ENCODE measurements at regions of chr3 and their contacts with region 1.

Region 1: GRCh38 chr3:64163755-64164148 is 61.5 kb downstream of the PRICKLE2 start:
- DNase-seq: no peak
- ATAC-seq: no peak
- H3K4me3 ChIP-seq: no peak overlapping the region
- H3K27ac ChIP-seq: no peak overlapping the region
- H3K4me1 ChIP-seq: peaks cover 3% of the 10 kb centered on the region
- H3K27me3 ChIP-seq: no peaks in the 10 kb centered on the region

Region 2: DNA sequence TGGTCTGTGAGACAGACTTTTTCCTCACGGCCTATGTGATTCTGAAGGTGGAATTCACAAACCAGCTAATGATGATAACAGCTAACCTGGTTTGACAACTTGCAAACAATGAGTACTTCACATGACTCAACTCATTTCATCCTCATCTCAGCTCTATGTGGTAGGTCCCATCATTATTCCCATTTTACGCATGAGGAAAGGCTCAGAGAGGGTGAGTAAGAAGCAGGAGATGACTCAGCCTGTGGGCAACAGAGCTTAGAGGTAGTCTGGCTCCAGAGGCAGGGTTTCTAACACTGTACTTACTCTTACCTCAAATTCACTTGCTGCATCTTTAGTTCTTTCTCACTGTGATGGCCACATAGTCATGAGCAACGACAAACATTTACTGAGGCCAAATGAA is 114.6 kb before region 1 on chr3:
- intact Hi-C with region 1: loop called in 1 of 4 experiments (anchors 10 kb)
- DNase-seq: no peak
- ATAC-seq: no peak
- H3K4me3 ChIP-seq: no peak overlapping the region
- H3K27ac ChIP-seq: no peak overlapping the region
- H3K4me1 ChIP-seq: peaks cover 3% of the 10 kb centered on the region
- H3K27me3 ChIP-seq: no peaks in the 10 kb centered on the region

Region 3: GRCh38 chr3:64475037-64475436 is 311.3 kb after region 1 on chr3:
- intact Hi-C with region 1: no loop called
- DNase-seq: no peak
- ATAC-seq: no peak
- H3K4me3 ChIP-seq: no peak overlapping the region
- H3K27ac ChIP-seq: no peak overlapping the region
- H3K4me1 ChIP-seq: no peaks in the 10 kb centered on the region
- H3K27me3 ChIP-seq: no peaks in the 10 kb centered on the region

Measured in right cardiac atrium (tissue), 5 donors.